ENCODE measurements at regions of chr3 and their contacts with region 1.

Region 1: DNA sequence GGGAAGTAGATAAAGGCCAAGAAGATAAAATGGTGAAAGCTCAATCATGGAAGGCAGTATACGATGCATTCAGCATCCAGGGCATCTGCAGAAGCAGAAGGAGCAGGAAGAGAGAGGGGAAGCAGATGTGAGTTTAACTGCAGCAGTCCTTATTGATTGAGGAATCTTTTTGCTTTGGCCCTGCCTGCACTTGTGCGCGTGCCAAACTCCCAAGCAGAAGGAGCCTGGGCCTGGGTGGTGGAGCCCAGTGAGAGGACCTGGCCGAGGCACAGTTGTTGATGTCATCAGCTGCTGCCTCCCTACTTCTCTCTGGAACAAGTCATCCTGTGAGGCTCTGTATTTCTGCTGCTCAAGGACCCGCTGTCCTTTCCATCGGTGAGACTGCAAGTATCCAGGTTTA is 65.5 kb upstream of the ROPN1 start:
- DNase-seq: peak in 1 of 2 donors; percentile 83
- H3K4me3 ChIP-seq: peak overlapping the region in 1 of 2 donors; percentile 5
- H3K27ac ChIP-seq: peak overlapping the region; percentile 35 to 47
- H3K4me1 ChIP-seq: peaks cover 19 to 42% of the 10 kb centered on the region in 2 donors
- H3K27me3 ChIP-seq: no peaks in the 10 kb centered on the region
- CTCF ChIP-seq: no peak

Region 2: DNA sequence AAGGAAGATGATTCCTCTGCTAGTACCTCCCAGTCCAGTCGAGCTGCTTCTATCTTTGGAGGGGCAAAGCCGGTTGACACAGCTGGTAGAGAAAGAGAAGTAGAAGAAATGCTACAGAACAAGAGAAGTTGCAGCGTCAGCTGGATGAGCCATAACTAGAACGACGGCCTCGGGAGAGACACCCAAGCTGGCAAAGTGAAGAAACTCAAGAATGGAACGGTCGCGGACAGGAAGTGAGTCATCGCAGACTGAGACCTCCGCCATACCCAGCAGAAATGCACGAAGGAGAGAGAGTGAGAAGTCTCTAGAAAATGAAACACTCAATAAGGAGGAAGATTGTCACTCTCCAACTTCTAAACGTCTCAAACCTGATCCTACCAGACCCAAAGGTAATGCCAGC is 1395.8 kb before region 1 on chr3:
- intact Hi-C with region 1: no loop called
- DNase-seq: no peak
- H3K4me3 ChIP-seq: no peak overlapping the region
- H3K27ac ChIP-seq: no peak overlapping the region
- H3K4me1 ChIP-seq: no peaks in the 10 kb centered on the region
- H3K27me3 ChIP-seq: no peaks in the 10 kb centered on the region
- CTCF ChIP-seq: no peak

Region 3: DNA sequence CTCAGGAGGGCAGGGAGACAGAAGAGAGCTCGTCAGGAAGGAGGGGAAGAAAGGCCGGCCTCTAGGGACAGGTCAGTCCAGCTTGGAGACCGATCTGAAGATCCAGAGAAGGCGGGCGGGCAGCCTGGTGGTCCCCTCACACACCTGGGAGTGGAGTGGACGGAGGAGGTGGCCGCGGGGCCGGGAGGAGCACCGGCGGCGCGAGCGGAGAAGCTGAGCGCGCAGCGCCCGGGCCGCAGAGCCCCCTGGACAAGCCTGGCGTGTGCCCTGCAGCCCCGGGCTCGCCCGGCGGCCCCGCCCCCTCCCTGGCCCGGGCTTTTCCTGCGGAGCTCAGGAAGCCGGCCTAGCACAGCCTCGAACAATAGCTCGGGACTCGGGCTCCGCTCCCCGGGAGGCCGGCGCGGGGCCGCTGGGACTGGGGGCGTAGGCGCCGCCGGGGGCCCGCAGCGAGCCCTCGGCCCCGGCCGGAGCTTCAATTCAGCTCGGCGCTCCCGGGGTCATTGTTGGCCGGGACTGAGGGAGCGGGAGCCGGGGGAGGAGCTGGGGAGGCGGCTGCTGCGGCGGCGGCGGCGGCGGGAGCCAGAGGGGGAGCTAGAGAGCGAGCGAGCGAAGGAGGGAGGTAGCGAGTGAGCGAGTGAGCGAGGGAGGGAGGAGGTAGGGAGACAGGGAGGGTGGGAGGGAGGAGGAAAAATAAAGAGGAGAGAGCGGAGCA is 24.6 kb before region 1 on chr3:
- intact Hi-C with region 1: loop called (anchors 2 kb)
- DNase-seq: peak in 1 of 2 donors; percentile 91
- H3K4me3 ChIP-seq: peak overlapping the region; percentile 85 to 96
- H3K27ac ChIP-seq: peak overlapping the region; percentile 81 to 90
- H3K4me1 ChIP-seq: peaks cover 0 to 9% of the 10 kb centered on the region in 2 donors
- H3K27me3 ChIP-seq: no peaks in the 10 kb centered on the region
- CTCF ChIP-seq: peak; percentile 63 to 92 (median 90)

Region 4: GRCh38 chr3:124084022-124084881 is 26.8 kb after region 1 on chr3:
- intact Hi-C with region 1: no loop called
- DNase-seq: no peak
- H3K4me3 ChIP-seq: no peak overlapping the region
- H3K27ac ChIP-seq: peak overlapping the region; percentile 41 to 80
- H3K4me1 ChIP-seq: peaks cover 8 to 44% of the 10 kb centered on the region in 2 donors
- H3K27me3 ChIP-seq: no peaks in the 10 kb centered on the region
- CTCF ChIP-seq: no peak